ENCODE measurements at regions of chr13 and their contacts with region 1.

Region 1: DNA sequence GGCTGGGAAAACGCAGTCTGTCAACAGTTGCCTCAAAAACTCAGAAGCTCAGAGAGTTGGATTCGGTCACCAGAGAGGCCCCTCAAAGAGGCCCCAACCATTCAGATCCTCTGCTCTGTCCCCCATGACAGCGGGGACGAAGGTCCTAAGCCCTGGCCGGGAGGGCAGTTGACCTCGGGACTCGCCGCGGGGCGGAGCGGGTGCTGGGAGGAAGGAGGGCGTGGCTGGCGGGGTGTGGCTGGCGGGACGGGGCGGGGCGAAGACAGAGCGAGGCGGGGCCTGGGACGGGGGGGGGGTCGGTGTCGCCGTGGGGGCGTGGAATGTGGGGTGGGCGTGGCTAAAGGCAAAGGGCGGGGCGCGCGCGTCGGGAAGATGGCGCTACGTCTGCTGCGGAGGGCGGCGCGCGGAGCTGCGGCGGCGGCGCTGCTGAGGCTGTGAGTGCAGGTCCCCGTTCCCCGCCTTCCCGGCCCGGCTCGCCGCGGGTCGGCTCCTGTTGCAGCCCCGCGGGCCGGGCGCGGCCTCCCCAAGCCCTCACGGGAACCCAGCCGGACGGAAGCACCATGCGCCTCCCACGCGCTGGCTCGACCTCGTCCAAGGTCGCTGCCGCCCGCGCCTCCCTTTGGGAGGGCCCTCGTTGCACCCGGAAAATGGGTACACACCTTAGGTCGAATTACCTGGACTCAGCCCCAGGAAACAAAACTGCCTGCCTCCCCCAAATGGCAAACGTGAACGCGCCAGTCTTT is 105.2 kb downstream of the TM9SF2 start:
- DNase-seq: peak; percentile 86
- ATAC-seq: peak; percentile 91
- H3K4me3 Mint-ChIP-seq: peak within 1 kb of the TSS; percentile 91
- H3K27ac Mint-ChIP-seq: peak within 1 kb of the TSS; percentile 86
- H3K4me1 Mint-ChIP-seq: peaks cover 38% of the 10 kb centered on the region
- H3K27me3 Mint-ChIP-seq: no peaks in the 10 kb centered on the region
- CTCF ChIP-seq: no peak

Region 2: GRCh38 chr13:98576963-98577822 is 1029.3 kb before region 1 on chr13 and contains the start of gene STK24:
- CTCF ChIA-PET with region 1: no interaction called
- POLR2A ChIA-PET with region 1: no interaction called
- intact Hi-C with region 1: loop called (anchors 10 kb)
- DNase-seq: peak; percentile 82
- ATAC-seq: peak; percentile 78
- H3K4me3 Mint-ChIP-seq: peak within 1 kb of the TSS; percentile 88
- H3K27ac Mint-ChIP-seq: peak within 1 kb of the TSS; percentile 91
- H3K4me1 Mint-ChIP-seq: peaks cover 45% of the 10 kb centered on the region
- H3K27me3 Mint-ChIP-seq: no peaks in the 10 kb centered on the region
- CTCF ChIP-seq: no peak
- total RNA-seq, gene STK24: 74.8 and 84.8 TPM in 2 replicates

Region 3: DNA sequence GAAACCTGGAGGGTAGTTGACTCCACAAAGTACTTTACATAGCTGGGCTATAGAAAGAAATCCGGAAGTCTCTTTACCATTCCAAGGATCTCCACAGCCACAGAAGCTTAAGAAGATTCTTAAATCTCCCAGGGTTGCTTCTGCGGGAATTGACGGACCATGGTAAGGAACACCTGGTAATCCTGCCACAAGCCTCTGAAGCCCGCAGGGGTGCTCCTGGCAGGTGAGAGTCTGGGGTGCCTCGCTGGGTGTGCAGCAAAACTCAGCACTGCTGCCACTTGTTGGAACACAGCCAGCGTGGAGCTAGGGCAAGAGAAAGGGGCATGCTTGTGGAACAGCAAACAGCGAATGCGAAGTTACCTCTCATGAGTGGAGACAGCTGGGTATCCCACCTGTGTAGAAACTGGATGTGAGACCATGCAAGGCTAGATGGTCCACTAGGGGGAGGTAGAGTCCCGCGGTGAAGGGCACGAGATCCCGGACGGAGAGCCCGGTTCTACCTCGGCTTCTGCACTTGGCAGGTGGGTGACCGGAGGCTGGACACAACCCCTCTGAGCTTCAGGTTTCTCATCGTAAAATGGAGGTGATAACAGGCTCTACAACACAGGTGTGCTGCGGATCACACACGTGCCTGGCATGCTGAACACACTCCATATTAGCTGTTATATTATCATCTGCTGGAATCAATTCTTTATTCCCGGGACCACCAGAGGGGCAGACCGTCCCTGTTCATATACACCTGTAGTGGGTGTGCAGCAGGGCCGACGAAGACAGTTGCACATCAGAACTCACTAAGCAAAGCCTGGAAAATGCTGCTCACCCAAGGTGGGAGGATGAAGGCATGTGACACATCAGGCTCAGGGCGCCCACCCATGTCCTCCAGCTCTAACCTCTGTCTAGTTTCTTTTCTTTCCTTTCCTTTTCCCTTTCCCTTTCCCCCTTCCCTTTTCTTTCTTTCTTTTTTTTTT is 429.9 kb before region 1 on chr13:
- CTCF ChIA-PET with region 1: no interaction called
- POLR2A ChIA-PET with region 1: no interaction called
- intact Hi-C with region 1: loop called (anchors 5 kb)
- DNase-seq: peak; percentile 64
- ATAC-seq: peak; percentile 90
- H3K4me3 Mint-ChIP-seq: peak overlapping the region; percentile 58
- H3K27ac Mint-ChIP-seq: peak overlapping the region; percentile 24
- H3K4me1 Mint-ChIP-seq: peaks cover 43% of the 10 kb centered on the region
- H3K27me3 Mint-ChIP-seq: peaks cover 2% of the 10 kb centered on the region
- CTCF ChIP-seq: no peak

Region 4: GRCh38 chr13:99419591-99420243 is 186.8 kb before region 1 on chr13:
- CTCF ChIA-PET with region 1: no interaction called
- POLR2A ChIA-PET with region 1: interaction called, 5 read pairs
- intact Hi-C with region 1: loop called (anchors 1 kb)
- DNase-seq: no peak
- ATAC-seq: no peak
- H3K4me3 Mint-ChIP-seq: peak overlapping the region; percentile 80
- H3K27ac Mint-ChIP-seq: peak overlapping the region; percentile 96
- H3K4me1 Mint-ChIP-seq: peaks cover 72% of the 10 kb centered on the region
- H3K27me3 Mint-ChIP-seq: no peaks in the 10 kb centered on the region
- CTCF ChIP-seq: no peak

Region 5: GRCh38 chr13:99442273-99442895 is 164.1 kb before region 1 on chr13:
- CTCF ChIA-PET with region 1: interaction called, 3 read pairs
- POLR2A ChIA-PET with region 1: no interaction called
- intact Hi-C with region 1: loop called (anchors 2 kb)
- DNase-seq: no peak
- ATAC-seq: peak; percentile 78
- H3K4me3 Mint-ChIP-seq: no peak overlapping the region
- H3K27ac Mint-ChIP-seq: no peak overlapping the region
- H3K4me1 Mint-ChIP-seq: peaks cover 16% of the 10 kb centered on the region
- H3K27me3 Mint-ChIP-seq: peaks cover 2% of the 10 kb centered on the region
- CTCF ChIP-seq: peak; percentile 99

Region 6: DNA sequence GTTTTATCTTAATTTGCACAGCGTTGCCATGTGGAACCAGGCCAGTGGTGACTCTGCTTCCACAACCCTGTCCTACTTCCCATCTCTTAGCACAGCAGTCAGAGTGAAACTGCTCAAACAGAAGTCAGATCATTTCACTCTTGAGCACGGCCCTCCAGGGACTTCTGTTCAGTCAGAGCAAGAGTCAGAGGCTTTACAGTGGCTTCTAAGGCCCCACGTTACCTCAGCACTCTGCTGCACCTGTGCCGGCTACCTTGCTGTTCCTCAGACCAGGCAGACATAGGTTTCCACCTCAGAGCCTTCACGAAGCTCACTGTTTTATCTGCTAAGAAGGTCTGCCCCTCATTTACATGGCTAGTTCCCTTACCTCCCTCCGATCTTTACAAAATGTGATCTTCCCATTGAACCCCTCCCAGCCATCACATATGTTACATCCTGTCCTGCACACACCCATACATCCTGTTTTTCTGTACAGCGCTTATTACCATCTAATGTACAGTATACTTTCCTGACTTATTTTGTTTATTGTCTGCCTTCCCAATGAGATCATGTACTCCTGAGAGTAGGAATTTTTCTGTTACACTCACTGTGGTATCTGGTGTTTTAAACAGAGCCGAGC is 63.6 kb before region 1 on chr13:
- CTCF ChIA-PET with region 1: interaction called, 4 read pairs
- POLR2A ChIA-PET with region 1: interaction called, 17 read pairs
- intact Hi-C with region 1: loop called (anchors 1 kb)
- DNase-seq: peak; percentile 61
- ATAC-seq: peak; percentile 94
- H3K4me3 Mint-ChIP-seq: peak overlapping the region; percentile 53
- H3K27ac Mint-ChIP-seq: peak overlapping the region; percentile 84
- H3K4me1 Mint-ChIP-seq: peaks cover 67% of the 10 kb centered on the region
- H3K27me3 Mint-ChIP-seq: no peaks in the 10 kb centered on the region
- CTCF ChIP-seq: no peak

Region 7: GRCh38 chr13:99548448-99548847 is 58.0 kb before region 1 on chr13:
- CTCF ChIA-PET with region 1: no interaction called
- POLR2A ChIA-PET with region 1: interaction called, 17 read pairs
- intact Hi-C with region 1: no loop called
- DNase-seq: no peak
- ATAC-seq: no peak
- H3K4me3 Mint-ChIP-seq: peak overlapping the region; percentile 25
- H3K27ac Mint-ChIP-seq: peak overlapping the region; percentile 86
- H3K4me1 Mint-ChIP-seq: peaks cover 69% of the 10 kb centered on the region
- H3K27me3 Mint-ChIP-seq: no peaks in the 10 kb centered on the region
- CTCF ChIP-seq: no peak

Region 8: DNA sequence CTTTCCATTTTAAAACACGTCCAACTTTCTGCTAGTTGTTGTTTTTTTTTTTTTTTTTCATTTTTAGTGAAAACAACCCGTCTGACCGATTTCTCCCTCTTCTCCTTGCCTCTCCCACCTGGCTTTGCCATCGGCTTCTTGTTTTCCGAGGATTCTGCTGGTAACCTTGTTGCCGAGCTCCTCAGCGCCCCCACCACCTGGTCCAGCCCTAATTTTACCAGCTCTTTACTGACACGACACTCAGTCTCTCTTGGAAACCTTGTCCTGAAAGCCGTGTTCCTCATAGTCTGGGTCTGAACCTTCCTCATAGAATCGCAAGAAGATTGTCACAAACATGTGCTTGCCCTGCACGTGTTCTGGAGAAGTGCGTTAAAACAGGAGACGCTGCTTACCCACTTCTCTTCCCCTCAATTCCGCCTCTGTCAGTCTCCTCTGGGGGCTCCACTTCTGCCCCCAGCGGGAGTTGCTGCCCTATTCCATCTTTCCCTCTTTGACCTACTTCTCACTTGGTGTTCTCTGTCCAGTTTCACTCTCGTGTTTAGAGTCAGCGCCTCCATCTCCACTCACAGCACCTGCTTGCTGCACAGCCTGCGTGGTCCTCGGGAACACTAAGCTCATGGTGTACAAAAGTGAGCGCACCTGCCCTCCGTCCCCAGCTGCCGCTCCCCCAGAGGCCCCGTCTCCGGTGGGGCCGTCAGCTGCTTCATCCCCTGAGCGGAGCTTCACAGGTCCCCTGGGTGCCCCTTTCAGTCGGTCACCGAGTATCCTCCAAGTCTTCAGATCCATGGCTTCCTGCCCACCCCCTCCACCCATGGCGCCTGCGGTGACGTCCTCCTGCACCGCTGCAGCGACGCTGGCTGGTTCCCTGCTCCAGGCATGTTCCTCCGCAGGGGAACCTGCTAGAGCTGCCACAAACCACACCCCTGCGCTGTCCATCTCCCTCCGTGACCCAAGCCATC is 40.1 kb before region 1 on chr13:
- CTCF ChIA-PET with region 1: no interaction called
- POLR2A ChIA-PET with region 1: no interaction called
- intact Hi-C with region 1: no loop called
- DNase-seq: no peak
- ATAC-seq: peak; percentile 14
- H3K4me3 Mint-ChIP-seq: peak overlapping the region; percentile 64
- H3K27ac Mint-ChIP-seq: peak overlapping the region; percentile 37
- H3K4me1 Mint-ChIP-seq: peaks cover 2% of the 10 kb centered on the region
- H3K27me3 Mint-ChIP-seq: no peaks in the 10 kb centered on the region
- CTCF ChIP-seq: no peak

Region 9: GRCh38 chr13:99647596-99647985 is 41.1 kb after region 1 on chr13:
- CTCF ChIA-PET with region 1: no interaction called
- POLR2A ChIA-PET with region 1: no interaction called
- intact Hi-C with region 1: no loop called
- DNase-seq: no peak
- ATAC-seq: no peak
- H3K4me3 Mint-ChIP-seq: no peak overlapping the region
- H3K27ac Mint-ChIP-seq: no peak overlapping the region
- H3K4me1 Mint-ChIP-seq: peaks cover 2% of the 10 kb centered on the region
- H3K27me3 Mint-ChIP-seq: no peaks in the 10 kb centered on the region
- CTCF ChIP-seq: no peak